GM12878 (cell line): ENCODE measurements at regions of chr5 and their contacts with region 1.

Region 1: GRCh38 chr5:92470770-92471169 is 1087.7 kb upstream of the ARRDC3 start:
- DNase-seq: no peak
- ATAC-seq: peak; percentile 45; the same call in 2 of the 3 replicates
- H3K4me3 ChIP-seq: no peak overlapping the region
- H3K27ac ChIP-seq: no peak overlapping the region
- H3K4me1 ChIP-seq: no peaks in the 10 kb centered on the region
- H3K27me3 ChIP-seq: no peaks in the 10 kb centered on the region
- CTCF ChIP-seq: peak; percentile 15 to 44 (median 20); a peak in 3 of 6 replicates
- EP300 ChIP-seq: no peak
- POLR2A ChIP-seq: no peak
- RAD21 ChIP-seq: peak; percentile 52

Region 2: GRCh38 chr5:92309336-92309991 is 161.3 kb before region 1 on chr5:
- CTCF ChIA-PET with region 1: interaction called, 14 read pairs
- POLR2A ChIA-PET with region 1: no interaction called
- RAD21 ChIA-PET with region 1: interaction called, 4 read pairs
- SMC1A ChIA-PET with region 1: interaction called, 12 read pairs
- in situ Hi-C with region 1: no loop called
- intact Hi-C with region 1: loop called (anchors 2 kb)
- DNase-seq: no peak
- ATAC-seq: peak; percentile 64
- H3K4me3 ChIP-seq: no peak overlapping the region
- H3K27ac ChIP-seq: no peak overlapping the region
- H3K4me1 ChIP-seq: no peaks in the 10 kb centered on the region
- H3K27me3 ChIP-seq: no peaks in the 10 kb centered on the region
- CTCF ChIP-seq: peak in 2 of 3 experiments; percentile 27 to 47; a peak in 3 of 6 replicates
- EP300 ChIP-seq: no peak
- POLR2A ChIP-seq: no peak
- RAD21 ChIP-seq: peak; percentile 75

Region 3: DNA sequence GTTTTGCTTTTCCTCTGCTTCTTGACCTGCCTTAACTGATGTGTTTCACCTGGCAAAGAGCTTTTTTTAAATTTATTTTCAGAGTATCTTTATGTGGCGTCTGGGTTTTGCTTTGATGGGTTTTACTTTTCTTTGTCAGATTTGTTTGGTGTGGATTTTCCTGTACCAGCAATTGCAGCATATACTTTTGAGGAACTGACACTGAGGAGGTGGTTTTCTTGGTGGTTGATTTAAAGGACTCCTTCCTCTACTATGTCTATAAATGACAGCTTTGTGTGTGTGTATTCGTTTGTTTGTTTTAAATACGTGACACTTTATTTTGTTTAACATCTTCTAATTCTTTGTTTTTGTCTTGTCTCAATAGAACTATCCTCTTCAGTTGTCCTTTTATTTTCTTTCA is 15.8 kb before region 1 on chr5:
- CTCF ChIA-PET with region 1: interaction called, 17 read pairs
- POLR2A ChIA-PET with region 1: no interaction called
- RAD21 ChIA-PET with region 1: no interaction called
- SMC1A ChIA-PET with region 1: interaction called, 11 read pairs
- in situ Hi-C with region 1: no loop called
- intact Hi-C with region 1: no loop called
- DNase-seq: peak; percentile 73
- ATAC-seq: peak; percentile 100
- H3K4me3 ChIP-seq: no peak overlapping the region; the same call in 1 of the 2 replicates
- H3K27ac ChIP-seq: no peak overlapping the region
- H3K4me1 ChIP-seq: no peaks in the 10 kb centered on the region; the same call in 1 of the 2 replicates
- H3K27me3 ChIP-seq: no peaks in the 10 kb centered on the region
- CTCF ChIP-seq: no peak
- EP300 ChIP-seq: peak; percentile 66 to 88
- POLR2A ChIP-seq: no peak
- RAD21 ChIP-seq: 0 out of 2 replicates have a peak, but pooled peaks have one; percentile 3

Region 4: DNA sequence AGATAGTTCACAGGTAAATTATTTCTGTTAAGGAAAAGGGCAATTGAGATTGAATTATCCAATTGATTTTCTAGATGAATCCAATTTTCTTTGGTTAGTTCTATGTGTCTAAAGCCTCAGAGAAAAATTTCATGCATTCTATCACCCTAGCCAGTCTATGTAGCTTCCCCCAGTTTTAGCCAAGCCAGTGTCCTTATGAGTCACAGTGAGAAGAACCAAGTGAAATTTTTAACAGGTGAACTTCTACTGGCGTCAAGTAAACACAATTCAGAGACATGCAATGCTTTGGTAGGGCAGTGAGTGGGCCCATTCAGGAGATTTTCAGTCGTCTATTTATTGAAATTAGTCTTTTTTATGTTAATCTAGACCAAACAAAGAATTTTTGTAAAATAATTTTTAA is 10.3 kb before region 1 on chr5:
- CTCF ChIA-PET with region 1: interaction called, 17 read pairs
- POLR2A ChIA-PET with region 1: no interaction called
- RAD21 ChIA-PET with region 1: no interaction called
- SMC1A ChIA-PET with region 1: interaction called, 11 read pairs
- in situ Hi-C with region 1: no loop called
- intact Hi-C with region 1: no loop called
- DNase-seq: no peak
- ATAC-seq: 0 out of 3 replicates have a peak, but pooled peaks have one; percentile 25
- H3K4me3 ChIP-seq: no peak overlapping the region
- H3K27ac ChIP-seq: no peak overlapping the region
- H3K4me1 ChIP-seq: no peaks in the 10 kb centered on the region; the same call in 1 of the 2 replicates
- H3K27me3 ChIP-seq: no peaks in the 10 kb centered on the region
- CTCF ChIP-seq: no peak
- EP300 ChIP-seq: no peak
- POLR2A ChIP-seq: no peak
- RAD21 ChIP-seq: no peak

Region 5: GRCh38 chr5:92605591-92605990 is 134.8 kb after region 1 on chr5:
- CTCF ChIA-PET with region 1: no interaction called
- POLR2A ChIA-PET with region 1: no interaction called
- RAD21 ChIA-PET with region 1: no interaction called
- SMC1A ChIA-PET with region 1: no interaction called
- in situ Hi-C with region 1: no loop called
- intact Hi-C with region 1: no loop called
- DNase-seq: no peak
- ATAC-seq: no peak
- H3K4me3 ChIP-seq: no peak overlapping the region
- H3K27ac ChIP-seq: no peak overlapping the region
- H3K4me1 ChIP-seq: no peaks in the 10 kb centered on the region
- H3K27me3 ChIP-seq: no peaks in the 10 kb centered on the region
- CTCF ChIP-seq: no peak
- EP300 ChIP-seq: no peak
- POLR2A ChIP-seq: no peak
- RAD21 ChIP-seq: no peak